ENCODE measurements at regions of chr1 and their contacts with region 1.

Region 1: DNA sequence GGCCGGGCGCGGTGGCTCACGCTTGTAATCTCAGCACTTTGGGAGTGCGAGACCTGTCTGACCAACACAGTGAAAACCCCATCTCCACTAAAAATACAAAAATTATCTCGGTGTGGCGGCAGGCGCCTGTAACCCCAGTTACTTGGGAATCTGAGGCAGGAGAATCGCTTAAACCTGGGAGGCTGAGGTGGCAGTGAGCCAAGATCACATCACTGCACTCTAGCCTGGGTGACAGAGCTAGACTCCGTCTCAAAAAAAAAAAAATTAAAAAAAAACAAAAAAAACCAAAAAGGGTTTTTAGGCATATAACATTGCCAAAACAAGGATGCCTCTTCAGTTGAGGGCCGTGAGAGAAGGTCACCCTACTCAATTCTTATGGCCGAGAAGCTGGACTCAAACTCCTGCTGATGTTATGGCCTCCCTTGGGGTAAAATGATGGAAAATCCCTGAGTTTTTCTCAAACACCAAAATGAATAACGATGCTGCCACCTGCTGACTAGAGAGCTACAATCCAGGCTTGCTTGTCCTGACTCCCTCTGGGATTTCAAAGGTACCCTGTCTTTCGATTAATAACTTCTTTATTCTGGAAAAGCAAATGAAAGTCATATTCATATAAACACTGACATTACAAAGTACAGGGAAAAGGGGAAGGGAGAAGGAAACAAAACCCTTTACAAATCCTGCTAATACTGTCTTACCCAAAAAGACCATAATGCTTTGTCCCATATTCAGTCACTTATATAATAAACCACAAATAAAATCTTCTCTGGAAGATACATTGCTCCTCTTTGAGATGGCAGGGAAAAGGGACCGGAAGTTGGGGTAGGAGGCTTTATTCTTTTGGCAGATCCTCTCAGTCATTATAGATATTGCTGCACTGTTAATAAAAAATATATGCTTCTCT is 10.7 kb downstream of the RAB42 start:
- DNase-seq: peak; percentile 86
- ATAC-seq: peak; percentile 31
- H3K4me3 ChIP-seq: no peak overlapping the region
- H3K27ac ChIP-seq: peak overlapping the region; percentile 81
- H3K4me1 ChIP-seq: peaks cover 35% of the 10 kb centered on the region
- H3K27me3 ChIP-seq: no peaks in the 10 kb centered on the region
- CTCF ChIP-seq: peak; percentile 91

Region 2: DNA sequence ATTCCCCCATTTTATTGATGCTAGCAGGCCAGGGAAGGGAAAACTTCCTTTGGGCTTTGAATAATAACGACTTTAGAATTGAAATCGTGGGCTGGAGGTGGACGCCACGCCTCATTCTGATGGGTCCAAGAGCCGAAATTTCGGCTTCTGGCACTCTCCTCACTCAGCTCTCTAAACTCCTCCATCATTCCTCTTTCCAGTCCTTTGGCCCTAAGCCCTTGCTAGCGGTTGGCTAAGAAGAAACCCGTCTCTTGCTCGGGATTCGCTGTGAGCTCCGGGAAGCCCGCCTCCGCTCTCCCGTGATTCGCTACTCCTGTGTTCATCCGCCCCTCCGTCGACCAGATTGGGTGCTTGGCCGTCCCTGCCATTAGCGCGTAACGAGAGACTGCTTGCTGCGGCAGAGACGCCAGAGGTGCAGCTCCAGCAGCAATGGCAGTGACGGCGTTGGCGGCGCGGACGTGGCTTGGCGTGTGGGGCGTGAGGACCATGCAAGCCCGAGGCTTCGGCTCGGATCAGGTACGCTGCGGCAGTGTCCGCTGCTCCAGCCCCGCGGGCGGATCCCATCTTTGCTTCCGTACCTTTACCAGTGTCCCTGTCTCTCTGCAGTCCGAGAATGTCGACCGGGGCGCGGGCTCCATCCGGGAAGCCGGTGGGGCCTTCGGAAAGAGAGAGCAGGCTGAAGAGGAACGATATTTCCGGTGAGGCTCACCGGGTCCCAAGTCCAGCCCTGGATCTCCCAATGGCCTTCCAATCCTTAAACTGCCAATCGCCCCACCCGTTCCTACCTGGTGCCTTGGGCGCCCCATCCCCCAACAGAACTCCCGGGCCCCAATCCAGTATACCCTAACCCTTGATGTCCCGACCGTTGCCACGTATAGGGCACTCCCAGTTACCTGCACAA is 366.8 kb before region 1 on chr1 and contains the start of gene ATP5IF1:
- CTCF ChIA-PET with region 1: no interaction called
- POLR2A ChIA-PET with region 1: interaction called, 30 read pairs
- intact Hi-C with region 1: no loop called
- DNase-seq: peak; percentile 98
- ATAC-seq: peak; percentile 92
- H3K4me3 ChIP-seq: peak within 1 kb of the TSS; percentile 92
- H3K27ac ChIP-seq: peak within 1 kb of the TSS; percentile 19
- H3K4me1 ChIP-seq: peaks cover 29% of the 10 kb centered on the region
- H3K27me3 ChIP-seq: no peaks in the 10 kb centered on the region
- CTCF ChIP-seq: no peak
- total RNA-seq, gene ATP5IF1: 364 and 465 TPM in 2 replicates

Region 3: GRCh38 chr1:28359592-28360239 is 243.1 kb before region 1 on chr1:
- CTCF ChIA-PET with region 1: no interaction called
- POLR2A ChIA-PET with region 1: no interaction called
- intact Hi-C with region 1: loop called (anchors 5 kb)
- DNase-seq: peak; percentile 78
- ATAC-seq: peak; percentile 78
- H3K4me3 ChIP-seq: no peak overlapping the region
- H3K27ac ChIP-seq: no peak overlapping the region
- H3K4me1 ChIP-seq: peaks cover 7% of the 10 kb centered on the region
- H3K27me3 ChIP-seq: no peaks in the 10 kb centered on the region
- CTCF ChIP-seq: peak; percentile 81

Region 4: GRCh38 chr1:28409090-28409489 is 193.7 kb before region 1 on chr1:
- CTCF ChIA-PET with region 1: no interaction called
- POLR2A ChIA-PET with region 1: no interaction called
- intact Hi-C with region 1: loop called (anchors 1 kb)
- DNase-seq: no peak
- ATAC-seq: no peak
- H3K4me3 ChIP-seq: no peak overlapping the region
- H3K27ac ChIP-seq: no peak overlapping the region
- H3K4me1 ChIP-seq: no peaks in the 10 kb centered on the region
- H3K27me3 ChIP-seq: no peaks in the 10 kb centered on the region
- CTCF ChIP-seq: no peak

Region 5: DNA sequence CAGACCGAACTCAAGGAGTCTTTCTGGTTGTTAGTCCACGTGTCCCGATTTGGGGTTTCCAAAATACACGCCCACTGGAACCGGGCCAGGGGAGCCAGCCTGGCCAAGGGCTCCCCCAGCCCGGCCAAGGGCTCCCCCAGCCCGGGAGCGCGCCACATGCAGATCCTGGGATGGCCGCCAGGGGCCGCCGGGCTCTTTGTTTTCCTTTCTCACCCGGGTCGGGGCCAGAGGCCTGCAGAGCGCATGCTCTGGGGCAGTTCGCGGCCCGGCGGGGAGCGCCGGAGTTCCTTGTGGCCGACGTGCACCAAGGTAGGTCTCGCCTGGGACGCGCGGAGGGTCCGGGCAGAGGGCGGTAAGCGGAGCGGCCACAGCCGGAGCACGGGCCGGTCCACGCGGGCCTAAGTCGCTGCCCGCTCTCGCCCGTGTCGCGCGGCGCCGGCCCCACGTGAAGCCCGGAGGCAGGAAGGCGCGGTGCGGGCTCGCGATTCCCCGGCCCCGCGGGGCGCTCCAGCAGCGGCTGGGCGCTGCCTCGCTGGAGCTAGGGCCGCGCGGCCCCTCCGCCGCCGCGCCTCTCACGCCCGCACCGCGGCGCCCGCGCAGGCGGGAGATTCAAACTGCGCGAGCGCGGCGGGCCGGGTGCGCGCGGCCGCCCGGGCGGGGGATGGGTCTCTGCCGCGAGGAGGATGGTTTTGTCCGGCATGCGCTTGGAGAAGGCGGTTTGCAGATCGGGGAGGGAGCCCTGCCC is 84.6 kb before region 1 on chr1:
- CTCF ChIA-PET with region 1: interaction called, 4 read pairs
- POLR2A ChIA-PET with region 1: interaction called, 3 read pairs
- intact Hi-C with region 1: loop called (anchors 1 kb)
- DNase-seq: peak; percentile 90
- ATAC-seq: peak; percentile 66
- H3K4me3 ChIP-seq: peak overlapping the region; percentile 81
- H3K27ac ChIP-seq: peak overlapping the region; percentile 80
- H3K4me1 ChIP-seq: peaks cover 30% of the 10 kb centered on the region
- H3K27me3 ChIP-seq: no peaks in the 10 kb centered on the region
- CTCF ChIP-seq: peak; percentile 91

Region 6: GRCh38 chr1:28552758-28553663 is 49.8 kb before region 1 on chr1 and contains the start of gene TRNAU1AP:
- CTCF ChIA-PET with region 1: no interaction called
- POLR2A ChIA-PET with region 1: no interaction called
- intact Hi-C with region 1: loop called (anchors 1 kb)
- DNase-seq: peak; percentile 98
- ATAC-seq: peak; percentile 92
- H3K4me3 ChIP-seq: peak within 1 kb of the TSS; percentile 95
- H3K27ac ChIP-seq: peak within 1 kb of the TSS; percentile 45
- H3K4me1 ChIP-seq: peaks cover 8% of the 10 kb centered on the region; the same call in 1 of the 2 replicates
- H3K27me3 ChIP-seq: no peaks in the 10 kb centered on the region
- CTCF ChIP-seq: no peak
- total RNA-seq, gene TRNAU1AP: 19.6 and 27.2 TPM in 2 replicates

Region 7: GRCh38 chr1:28581536-28582247 is 21.1 kb before region 1 on chr1:
- CTCF ChIA-PET with region 1: interaction called, 10 read pairs
- POLR2A ChIA-PET with region 1: interaction called, 32 read pairs
- intact Hi-C with region 1: loop called (anchors 2 kb)
- DNase-seq: peak; percentile 95
- ATAC-seq: peak; percentile 94
- H3K4me3 ChIP-seq: peak overlapping the region; percentile 99
- H3K27ac ChIP-seq: peak overlapping the region; percentile 66
- H3K4me1 ChIP-seq: peaks cover 15% of the 10 kb centered on the region
- H3K27me3 ChIP-seq: no peaks in the 10 kb centered on the region
- CTCF ChIP-seq: 0 out of 2 replicates have a peak, but pooled peaks have one; percentile 7

Measured in PC-3 (cell line).